ENCODE measurements at regions of chr6 and their contacts with region 1.

Region 1: GRCh38 chr6:32885698-32886286 is 31.8 kb downstream of the PSMB9 start:
- DNase-seq: peak; percentile 23
- ATAC-seq: peak; percentile 83
- H3K4me3 ChIP-seq: no peak overlapping the region
- H3K27ac ChIP-seq: no peak overlapping the region
- H3K4me1 ChIP-seq: 0 out of 2 replicates have a peak, but pooled peaks cover 3% of the 10 kb centered on the region
- H3K27me3 ChIP-seq: no peaks in the 10 kb centered on the region; a peak in 1 of 4 replicates
- CTCF ChIP-seq: peak; percentile 38 to 61 (median 43); a peak in 5 of 6 replicates
- EP300 ChIP-seq: no peak
- POLR2A ChIP-seq: no peak
- RAD21 ChIP-seq: peak; percentile 83

Region 2: GRCh38 chr6:32785781-32786533 is 99.8 kb before region 1 on chr6:
- CTCF ChIA-PET with region 1: no interaction called
- POLR2A ChIA-PET with region 1: no interaction called
- RAD21 ChIA-PET with region 1: no interaction called
- SMC1A ChIA-PET with region 1: no interaction called
- in situ Hi-C with region 1: no loop called
- intact Hi-C with region 1: no loop called
- DNase-seq: peak; percentile 27
- ATAC-seq: peak; percentile 94
- H3K4me3 ChIP-seq: no peak overlapping the region
- H3K27ac ChIP-seq: no peak overlapping the region
- H3K4me1 ChIP-seq: no peaks in the 10 kb centered on the region
- H3K27me3 ChIP-seq: no peaks in the 10 kb centered on the region; a peak in 1 of 4 replicates
- CTCF ChIP-seq: peak; percentile 64 to 78 (median 69)
- EP300 ChIP-seq: no peak
- POLR2A ChIP-seq: no peak
- RAD21 ChIP-seq: peak; percentile 80

Region 3: DNA sequence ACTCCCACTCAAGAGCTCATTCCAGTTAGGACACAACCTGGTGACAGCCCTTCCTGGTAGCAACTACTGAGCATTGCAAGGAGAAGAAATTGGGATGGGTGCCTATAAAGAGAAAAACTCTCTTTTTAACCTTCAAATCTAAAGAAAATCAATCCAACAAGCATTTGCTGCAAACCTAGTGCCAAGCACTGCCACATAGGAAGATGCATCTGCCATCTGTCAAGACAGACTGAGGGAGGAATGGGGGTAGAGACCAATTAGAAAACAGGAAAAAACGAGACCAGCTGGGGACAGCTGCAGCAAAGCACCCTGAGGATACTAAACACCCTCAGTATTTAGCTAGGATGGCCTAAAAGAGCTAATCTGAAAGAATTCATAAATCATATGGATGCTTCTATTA is 27.2 kb after region 1 on chr6:
- CTCF ChIA-PET with region 1: no interaction called
- POLR2A ChIA-PET with region 1: no interaction called
- RAD21 ChIA-PET with region 1: interaction called, 4 read pairs
- SMC1A ChIA-PET with region 1: interaction called, 16 read pairs
- in situ Hi-C with region 1: no loop called
- intact Hi-C with region 1: no loop called
- DNase-seq: no peak
- ATAC-seq: no peak
- H3K4me3 ChIP-seq: no peak overlapping the region
- H3K27ac ChIP-seq: no peak overlapping the region
- H3K4me1 ChIP-seq: no peaks in the 10 kb centered on the region
- H3K27me3 ChIP-seq: no peaks in the 10 kb centered on the region
- CTCF ChIP-seq: no peak
- EP300 ChIP-seq: no peak
- POLR2A ChIP-seq: no peak
- RAD21 ChIP-seq: no peak

Region 4: DNA sequence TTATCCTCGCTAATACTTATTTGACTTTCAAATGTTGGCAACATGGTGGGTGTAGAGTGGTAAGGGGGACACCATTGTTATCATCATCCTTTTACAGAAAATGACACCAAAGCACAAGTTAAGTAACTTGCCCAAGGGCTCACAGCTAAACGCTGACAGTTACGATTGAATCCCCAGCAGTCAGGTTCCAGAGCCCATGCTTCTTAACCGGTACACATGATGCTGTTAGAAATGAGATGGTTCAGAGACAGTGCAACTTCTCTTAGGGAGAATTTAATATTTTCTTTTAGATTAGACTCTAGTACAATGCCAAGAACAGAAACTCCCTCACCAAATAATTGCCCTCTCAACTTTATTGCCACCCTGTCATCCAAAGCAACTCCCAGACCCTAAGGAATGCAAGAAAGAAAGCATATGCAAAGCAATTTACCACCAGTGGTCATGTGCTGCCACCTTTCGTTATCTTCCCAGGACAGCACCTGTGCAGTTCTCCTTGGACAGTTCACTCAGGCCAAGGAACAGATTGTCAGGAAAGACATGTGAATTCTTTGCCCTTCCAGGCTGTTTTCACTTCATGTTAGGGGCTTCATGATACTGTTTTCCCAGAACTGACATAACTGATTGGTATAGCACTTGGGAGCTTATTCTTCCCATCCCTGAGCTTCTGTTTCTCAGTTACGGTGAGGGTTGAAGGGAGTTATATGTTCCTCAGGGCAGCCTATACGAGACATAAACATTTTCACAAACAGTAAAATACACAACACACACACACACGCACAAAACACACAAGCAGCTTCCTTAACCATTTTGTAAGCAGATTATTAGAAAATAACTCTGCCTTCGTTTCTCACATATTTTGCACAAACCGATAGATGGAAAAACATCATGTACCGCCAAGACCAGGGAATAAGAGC is 62.0 kb after region 1 on chr6:
- CTCF ChIA-PET with region 1: interaction called, 76 read pairs
- POLR2A ChIA-PET with region 1: interaction called, 3 read pairs
- RAD21 ChIA-PET with region 1: interaction called, 11 read pairs
- SMC1A ChIA-PET with region 1: interaction called, 11 read pairs
- in situ Hi-C with region 1: no loop called
- intact Hi-C with region 1: loop called (anchors 1 kb)
- DNase-seq: peak; percentile 56
- ATAC-seq: peak; percentile 13; the same call in 2 of the 3 replicates
- H3K4me3 ChIP-seq: peak overlapping the region; percentile 22
- H3K27ac ChIP-seq: peak overlapping the region; percentile 59
- H3K4me1 ChIP-seq: peaks cover 55% of the 10 kb centered on the region
- H3K27me3 ChIP-seq: no peaks in the 10 kb centered on the region
- CTCF ChIP-seq: peak; percentile 69 to 88 (median 82)
- EP300 ChIP-seq: no peak
- POLR2A ChIP-seq: no peak
- RAD21 ChIP-seq: peak; percentile 92

Region 5: DNA sequence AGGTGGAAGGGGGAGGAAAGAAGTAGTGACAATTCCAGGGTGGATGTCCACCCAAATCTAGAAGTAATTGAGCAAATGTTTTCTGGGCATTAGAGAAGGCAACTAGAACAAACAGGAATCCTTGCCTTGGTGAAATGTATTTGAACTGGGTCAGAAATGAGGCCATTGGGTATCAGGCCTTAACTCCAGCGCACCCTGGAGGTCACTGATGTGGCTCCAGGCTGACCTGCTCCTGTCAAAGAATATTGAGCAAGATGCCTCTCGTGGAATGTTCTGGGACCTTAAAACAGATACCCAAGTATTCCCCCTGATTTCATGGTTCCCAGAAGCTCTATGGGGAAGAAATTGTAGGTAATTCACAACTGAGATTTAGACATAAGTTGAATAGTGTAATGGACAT is 196.9 kb after region 1 on chr6:
- CTCF ChIA-PET with region 1: interaction called, 3 read pairs
- POLR2A ChIA-PET with region 1: no interaction called
- RAD21 ChIA-PET with region 1: no interaction called
- SMC1A ChIA-PET with region 1: interaction called, 3 read pairs
- in situ Hi-C with region 1: no loop called
- intact Hi-C with region 1: loop called (anchors 10 kb)
- DNase-seq: no peak
- ATAC-seq: peak; percentile 72
- H3K4me3 ChIP-seq: no peak overlapping the region
- H3K27ac ChIP-seq: 0 out of 2 replicates have a peak overlapping the region, but pooled peaks have one; percentile 35
- H3K4me1 ChIP-seq: peaks cover 21% of the 10 kb centered on the region
- H3K27me3 ChIP-seq: no peaks in the 10 kb centered on the region
- CTCF ChIP-seq: peak; percentile 70 to 73 (median 72)
- EP300 ChIP-seq: no peak
- POLR2A ChIP-seq: no peak
- RAD21 ChIP-seq: peak; percentile 78